PC-9 (cell line): ENCODE measurements at regions of chr1 and their contacts with region 1.

Region 1: DNA sequence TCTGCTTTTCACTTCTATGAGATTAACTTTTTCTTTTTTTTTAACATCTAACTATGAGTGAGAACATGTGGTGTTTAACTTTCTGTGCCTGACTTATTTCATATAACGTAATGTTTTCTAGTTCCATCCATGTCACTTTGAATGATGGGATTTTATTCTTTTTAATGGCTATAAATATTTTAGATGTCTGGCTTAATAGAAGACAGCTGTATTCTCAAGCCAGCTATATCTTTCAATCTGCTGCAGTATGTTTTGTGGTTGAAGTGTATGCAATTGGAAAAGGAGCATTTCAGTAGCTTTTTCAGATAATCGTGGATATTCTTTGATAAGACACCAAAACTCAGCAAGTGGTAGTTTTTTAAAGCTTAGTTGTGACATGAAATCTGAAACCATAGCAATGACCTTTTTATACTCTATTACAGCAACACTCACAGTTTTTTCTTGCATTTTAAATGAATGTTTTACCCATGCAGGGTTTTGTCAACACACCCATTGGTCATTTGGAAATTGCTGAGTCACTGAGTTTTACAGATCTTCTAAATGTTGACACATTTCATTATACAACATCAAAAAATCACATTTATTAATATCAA is 5.7 kb upstream of the SVBP start:
- DNase-seq: peak in 1 of 2 experiments; percentile 53
- H3K4me3 ChIP-seq: 0 out of 2 replicates have a peak overlapping the region, but pooled peaks have one; percentile 13
- H3K27ac ChIP-seq: peak overlapping the region; percentile 66
- H3K4me1 ChIP-seq: peaks cover 20% of the 10 kb centered on the region
- H3K27me3 ChIP-seq: no peaks in the 10 kb centered on the region
- CTCF ChIP-seq: no peak

Region 2: GRCh38 chr1:41394369-41394744 is 1428.5 kb before region 1 on chr1:
- CTCF ChIA-PET with region 1: no interaction called
- POLR2A ChIA-PET with region 1: interaction called, 20 read pairs
- intact Hi-C with region 1: no loop called
- DNase-seq: no peak
- H3K4me3 ChIP-seq: no peak overlapping the region
- H3K27ac ChIP-seq: no peak overlapping the region
- H3K4me1 ChIP-seq: no peaks in the 10 kb centered on the region
- H3K27me3 ChIP-seq: no peaks in the 10 kb centered on the region
- CTCF ChIP-seq: no peak